ENCODE measurements at regions of chr17 and their contacts with region 1.

Region 1: DNA sequence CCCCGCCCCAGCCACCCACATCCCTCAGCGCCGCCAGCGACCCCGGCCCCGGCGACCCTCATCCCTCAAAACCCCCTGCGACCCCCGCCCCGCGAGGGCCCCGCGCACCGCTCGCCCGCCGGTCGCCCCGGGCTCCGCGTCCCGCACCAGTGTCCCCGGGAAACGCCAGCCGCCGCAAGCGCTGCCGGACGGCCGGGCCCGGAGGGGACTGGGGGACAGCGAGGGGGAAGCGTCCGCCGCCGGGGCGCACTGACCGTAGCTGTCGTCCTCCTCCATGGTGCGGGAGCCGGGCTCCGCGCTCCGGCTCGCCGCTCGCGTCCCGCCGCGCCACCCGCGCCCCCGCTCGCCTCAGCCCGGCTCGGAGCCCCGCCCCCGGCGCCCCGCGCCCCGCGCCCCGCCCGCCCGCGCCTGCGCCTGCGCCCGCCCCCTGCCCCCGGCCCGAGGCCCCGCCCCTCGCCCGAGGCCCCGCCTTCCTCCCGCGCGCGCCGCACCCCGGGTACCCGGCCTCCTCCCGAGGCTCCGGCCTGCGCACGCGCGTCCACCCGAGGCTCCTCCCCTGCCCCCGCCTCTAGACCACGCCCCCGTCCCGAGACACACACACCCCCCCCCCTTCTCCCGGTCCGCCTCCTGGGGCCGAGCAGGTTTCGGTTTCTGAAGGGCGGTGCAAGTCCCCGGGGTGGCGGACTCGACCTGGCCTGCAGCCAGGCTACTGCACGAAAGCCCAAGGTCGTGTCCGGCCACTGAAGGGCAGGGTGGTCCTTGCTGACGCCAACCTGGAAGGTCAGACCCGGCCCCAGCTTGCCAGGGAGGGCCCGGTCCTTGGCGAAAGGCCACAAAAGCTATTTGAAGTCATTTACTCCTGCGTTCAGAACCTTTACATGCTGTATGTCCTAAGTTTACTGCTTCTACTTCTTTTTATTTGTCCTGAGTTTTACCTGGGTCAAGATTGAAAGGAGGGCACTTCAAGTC is at the start of gene CYTH1:
- DNase-seq: peak; percentile 96
- H3K4me3 Mint-ChIP-seq: peak within 1 kb of the TSS; percentile 86
- H3K27ac Mint-ChIP-seq: peak within 1 kb of the TSS; percentile 96
- H3K4me1 Mint-ChIP-seq: peaks cover 46% of the 10 kb centered on the region
- H3K27me3 Mint-ChIP-seq: no peaks in the 10 kb centered on the region
- total RNA-seq, gene CYTH1: 83.5 and 95.7 TPM in 2 replicates

Region 2: DNA sequence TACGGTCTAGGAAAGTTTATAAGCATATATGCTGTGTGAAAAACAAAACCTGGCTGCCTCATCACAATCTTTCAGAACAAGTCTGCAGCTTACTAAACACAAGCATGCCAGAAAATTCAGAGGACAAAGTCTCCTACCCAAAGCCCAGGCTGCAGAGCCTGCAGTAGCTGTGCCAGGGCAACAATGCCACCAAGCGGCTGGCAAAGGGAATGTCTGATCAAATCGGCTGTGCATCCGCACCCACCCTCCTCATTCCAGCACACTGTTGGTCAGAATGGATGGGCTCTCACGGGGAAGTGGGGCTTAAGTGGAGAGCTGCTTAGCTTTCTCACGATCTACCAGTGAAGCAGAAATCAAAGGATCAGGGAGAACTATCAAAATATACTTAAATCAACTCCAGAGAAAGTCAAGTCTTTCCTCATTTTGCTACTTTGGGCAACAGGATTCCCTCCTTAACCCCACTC is 73.7 kb before region 1 on chr17:
- intact Hi-C with region 1: loop called (anchors 2 kb)
- DNase-seq: peak; percentile 45
- H3K4me3 Mint-ChIP-seq: peak overlapping the region; percentile 66
- H3K27ac Mint-ChIP-seq: peak overlapping the region; percentile 75
- H3K4me1 Mint-ChIP-seq: peaks cover 48% of the 10 kb centered on the region
- H3K27me3 Mint-ChIP-seq: no peaks in the 10 kb centered on the region

Region 3: GRCh38 chr17:78736526-78737079 is 45.6 kb before region 1 on chr17:
- intact Hi-C with region 1: loop called (anchors 2 kb)
- DNase-seq: peak; percentile 55
- H3K4me3 Mint-ChIP-seq: peak overlapping the region; percentile 87
- H3K27ac Mint-ChIP-seq: peak overlapping the region; percentile 84
- H3K4me1 Mint-ChIP-seq: peaks cover 70% of the 10 kb centered on the region
- H3K27me3 Mint-ChIP-seq: no peaks in the 10 kb centered on the region

Region 4: GRCh38 chr17:78745407-78746088 is 36.7 kb before region 1 on chr17:
- intact Hi-C with region 1: loop called (anchors 2 kb)
- DNase-seq: no peak
- H3K4me3 Mint-ChIP-seq: no peak overlapping the region
- H3K27ac Mint-ChIP-seq: peak overlapping the region; percentile 55
- H3K4me1 Mint-ChIP-seq: peaks cover 74% of the 10 kb centered on the region
- H3K27me3 Mint-ChIP-seq: no peaks in the 10 kb centered on the region

Region 5: GRCh38 chr17:78759203-78759968 is 22.8 kb before region 1 on chr17:
- intact Hi-C with region 1: no loop called
- DNase-seq: peak; percentile 69
- H3K4me3 Mint-ChIP-seq: peak overlapping the region; percentile 51
- H3K27ac Mint-ChIP-seq: peak overlapping the region; percentile 98
- H3K4me1 Mint-ChIP-seq: peaks cover 54% of the 10 kb centered on the region
- H3K27me3 Mint-ChIP-seq: no peaks in the 10 kb centered on the region

Region 6: DNA sequence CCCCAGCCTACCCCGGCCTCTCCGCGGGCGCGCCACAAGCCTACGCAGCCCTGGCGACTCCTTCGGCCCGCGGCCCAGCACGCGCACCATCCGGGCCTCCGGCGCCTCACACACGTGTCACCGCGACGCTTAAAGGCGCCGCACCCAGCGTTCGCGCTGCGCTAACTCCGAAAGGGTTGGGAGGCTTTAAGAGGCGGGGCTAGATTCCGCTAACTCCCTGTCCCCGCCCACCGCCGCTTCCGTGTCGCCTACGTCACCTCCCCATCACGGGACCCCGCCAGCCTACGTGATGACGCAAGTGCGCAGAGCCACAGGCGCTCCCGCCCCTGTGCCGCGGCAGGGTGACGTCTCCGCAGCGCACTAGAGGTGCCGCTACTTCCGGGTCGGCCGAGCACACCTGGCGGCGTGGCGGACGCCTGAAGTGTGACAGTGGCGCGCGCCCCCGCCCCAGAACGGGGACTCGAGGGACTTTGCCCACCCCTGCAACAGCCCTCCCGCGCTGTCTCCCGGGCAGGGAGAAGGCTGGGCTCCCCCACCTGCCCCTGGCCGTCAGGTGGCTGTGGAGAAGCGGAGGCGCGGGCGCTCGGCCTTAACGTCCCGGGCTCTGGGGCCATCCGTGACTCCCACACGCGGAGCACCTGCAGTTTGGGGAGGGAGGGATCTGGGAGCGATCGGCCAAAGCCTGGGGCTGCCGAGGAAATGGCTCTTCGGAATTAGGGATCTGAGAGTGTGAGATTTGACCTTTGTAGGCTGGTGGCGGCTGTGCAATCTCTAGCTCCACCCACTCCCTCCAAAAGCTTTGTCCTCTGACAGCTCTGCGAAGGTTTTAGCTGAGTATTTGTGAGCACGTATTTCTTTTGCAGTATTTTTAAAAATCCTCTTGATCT is 58.7 kb after region 1 on chr17 and contains the start of gene USP36:
- intact Hi-C with region 1: loop called (anchors 2 kb)
- DNase-seq: peak; percentile 99
- H3K4me3 Mint-ChIP-seq: peak within 1 kb of the TSS; percentile 91
- H3K27ac Mint-ChIP-seq: peak within 1 kb of the TSS; percentile 94
- H3K4me1 Mint-ChIP-seq: peaks cover 35% of the 10 kb centered on the region
- H3K27me3 Mint-ChIP-seq: no peaks in the 10 kb centered on the region
- total RNA-seq, gene USP36: 103 and 105 TPM in 2 replicates